OCI-LY7 (cell line): ENCODE measurements at regions of chr5 and their contacts with region 1.

Region 1: DNA sequence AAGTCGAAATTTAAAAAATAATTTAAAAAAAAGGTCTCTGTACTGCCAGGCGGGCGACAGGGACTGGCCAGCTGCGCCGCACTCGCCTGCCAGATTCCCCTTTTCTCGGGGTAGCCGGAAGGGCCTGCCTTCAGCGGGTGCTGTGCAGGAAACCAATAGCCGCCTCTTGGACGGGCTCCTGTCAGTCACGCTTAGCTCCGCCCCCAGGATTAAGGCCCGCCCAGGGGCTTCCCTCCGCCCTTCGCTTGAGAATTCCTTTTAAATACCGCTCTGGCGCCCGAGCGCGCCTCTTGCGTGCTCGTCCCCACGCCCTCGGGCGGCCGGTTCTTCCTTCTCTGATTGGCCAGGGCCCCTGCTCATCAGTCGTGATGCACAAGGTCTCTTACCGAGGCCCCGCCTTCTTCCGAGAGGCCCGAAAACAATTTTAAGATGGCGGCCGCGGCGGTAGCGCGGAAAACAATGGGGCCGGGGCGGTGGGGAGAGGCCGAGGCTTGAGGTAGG is at the start of gene MAML1:
- DNase-seq: peak; percentile 100
- H3K4me3 ChIP-seq: peak within 1 kb of the TSS; percentile 88
- H3K27ac ChIP-seq: peak within 1 kb of the TSS; percentile 73
- H3K4me1 ChIP-seq: peaks cover 17% of the 10 kb centered on the region
- CTCF ChIP-seq: no peak
- total RNA-seq, gene MAML1: 12.1 and 17.0 TPM in 2 replicates

Region 2: GRCh38 chr5:179623003-179623880 is 109.2 kb before region 1 on chr5 and contains the start of gene HNRNPH1:
- CTCF ChIA-PET with region 1: no interaction called
- POLR2A ChIA-PET with region 1: no interaction called
- intact Hi-C with region 1: loop called (anchors 2 kb)
- DNase-seq: peak; percentile 98
- H3K4me3 ChIP-seq: peak within 1 kb of the TSS; percentile 100
- H3K27ac ChIP-seq: peak within 1 kb of the TSS; percentile 90
- H3K4me1 ChIP-seq: peaks cover 47% of the 10 kb centered on the region
- CTCF ChIP-seq: no peak; the same call in 1 of the 2 replicates
- total RNA-seq, gene HNRNPH1: 814 and 1,035 TPM in 2 replicates

Region 3: DNA sequence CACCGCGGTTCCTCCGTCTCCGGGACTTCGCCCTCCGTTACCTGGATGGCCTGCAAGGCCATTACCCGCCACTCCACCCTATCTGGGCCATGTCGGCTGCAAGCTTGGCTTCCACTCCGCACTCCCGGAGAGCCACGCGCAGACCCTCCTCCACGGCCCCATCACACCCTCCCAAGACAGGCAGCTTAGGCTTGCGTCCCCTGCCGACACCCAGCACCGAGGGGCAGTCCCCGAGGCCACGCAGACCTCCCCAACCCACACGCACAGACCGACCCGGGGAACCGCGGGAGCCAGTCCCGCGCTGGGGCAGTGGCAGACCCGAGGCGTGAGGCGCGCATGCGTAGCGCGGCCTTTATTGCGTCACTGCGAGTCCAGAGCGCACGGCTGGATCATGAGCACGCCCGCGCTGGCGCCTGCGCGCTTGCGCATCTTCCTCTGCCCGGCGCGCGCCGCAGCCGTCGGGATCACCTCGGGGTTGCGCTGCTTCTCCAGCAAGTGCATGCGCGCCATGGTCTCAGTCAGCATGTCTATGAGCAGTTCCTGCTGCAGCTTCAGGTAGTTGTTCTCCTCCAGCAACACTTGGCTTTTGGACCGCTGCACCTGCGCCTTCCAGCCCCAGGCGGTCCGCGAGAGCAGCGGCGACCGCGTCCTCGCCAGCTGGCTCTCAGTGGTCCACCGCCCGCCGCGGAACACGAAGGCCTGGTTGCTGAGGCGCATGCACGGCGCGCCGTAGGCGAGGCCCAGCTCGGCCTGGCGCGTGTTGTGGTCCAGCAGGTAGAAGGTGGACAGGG is 54.0 kb before region 1 on chr5:
- CTCF ChIA-PET with region 1: no interaction called
- POLR2A ChIA-PET with region 1: no interaction called
- intact Hi-C with region 1: loop called (anchors 1 kb)
- DNase-seq: peak; percentile 97
- H3K4me3 ChIP-seq: peak overlapping the region; percentile 90
- H3K27ac ChIP-seq: peak overlapping the region; percentile 61
- H3K4me1 ChIP-seq: peaks cover 30% of the 10 kb centered on the region
- CTCF ChIP-seq: no peak

Region 4: DNA sequence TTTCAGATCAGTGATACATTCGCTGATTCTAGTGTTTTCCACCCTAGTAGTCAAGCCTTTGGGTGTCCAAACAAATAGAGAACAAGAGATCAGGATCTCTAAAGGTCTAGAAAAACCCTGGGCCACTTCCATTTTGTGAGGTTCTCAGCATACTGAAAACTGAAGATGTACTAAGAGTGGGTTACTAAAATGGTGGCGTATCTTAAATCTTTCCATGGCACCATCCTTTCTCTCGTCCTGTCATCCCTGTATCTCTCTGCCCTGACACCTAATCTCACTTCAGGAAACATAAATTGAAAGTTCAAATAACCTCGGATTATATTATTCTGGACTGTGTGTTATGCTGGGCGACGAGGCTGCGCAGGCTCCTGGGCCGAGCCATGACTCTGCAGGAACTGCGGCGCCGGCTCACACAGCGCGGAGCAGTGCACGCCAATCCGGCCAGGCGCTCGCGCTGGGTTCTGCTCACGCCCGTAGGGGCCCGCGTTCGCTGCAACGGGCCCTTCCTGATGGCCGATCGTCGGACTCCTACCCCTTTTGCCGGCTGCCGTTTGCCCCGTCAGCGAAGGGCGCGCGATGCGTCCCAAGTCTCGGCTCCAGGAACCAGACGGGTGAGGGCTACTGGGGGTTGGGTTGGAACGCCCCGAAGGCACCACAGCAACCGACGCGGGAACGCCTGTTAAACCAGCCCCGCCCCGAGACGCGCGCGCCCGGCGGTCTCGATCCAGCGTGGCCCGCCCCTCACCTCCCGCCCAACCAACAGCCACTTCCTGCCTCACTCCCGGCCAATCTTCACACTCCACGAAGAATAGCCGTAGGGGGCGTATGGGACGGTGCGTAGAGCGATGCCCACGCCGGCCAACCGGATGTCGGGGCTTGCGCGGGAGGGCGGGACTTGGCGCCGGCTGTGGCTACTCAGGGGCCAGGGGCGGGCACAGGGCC is 34.2 kb before region 1 on chr5:
- CTCF ChIA-PET with region 1: no interaction called
- POLR2A ChIA-PET with region 1: interaction called, 3 read pairs
- intact Hi-C with region 1: loop called (anchors 1 kb)
- DNase-seq: peak; percentile 99
- H3K4me3 ChIP-seq: peak overlapping the region; percentile 82
- H3K27ac ChIP-seq: peak overlapping the region; percentile 78
- H3K4me1 ChIP-seq: peaks cover 24% of the 10 kb centered on the region
- CTCF ChIP-seq: no peak